GM12878 (cell line): ENCODE measurements at regions of chr1 and their contacts with region 1.

Region 1: GRCh38 chr1:177948336-177948972 is 21.4 kb downstream of the SEC16B start:
- DNase-seq: no peak
- ATAC-seq: peak; percentile 87
- H3K4me3 ChIP-seq: no peak overlapping the region
- H3K27ac ChIP-seq: no peak overlapping the region
- H3K4me1 ChIP-seq: no peaks in the 10 kb centered on the region
- H3K27me3 ChIP-seq: no peaks in the 10 kb centered on the region; a peak in 1 of 4 replicates
- CTCF ChIP-seq: peak; percentile 80 to 88 (median 87)
- EP300 ChIP-seq: no peak
- POLR2A ChIP-seq: no peak
- RAD21 ChIP-seq: peak; percentile 66

Region 2: DNA sequence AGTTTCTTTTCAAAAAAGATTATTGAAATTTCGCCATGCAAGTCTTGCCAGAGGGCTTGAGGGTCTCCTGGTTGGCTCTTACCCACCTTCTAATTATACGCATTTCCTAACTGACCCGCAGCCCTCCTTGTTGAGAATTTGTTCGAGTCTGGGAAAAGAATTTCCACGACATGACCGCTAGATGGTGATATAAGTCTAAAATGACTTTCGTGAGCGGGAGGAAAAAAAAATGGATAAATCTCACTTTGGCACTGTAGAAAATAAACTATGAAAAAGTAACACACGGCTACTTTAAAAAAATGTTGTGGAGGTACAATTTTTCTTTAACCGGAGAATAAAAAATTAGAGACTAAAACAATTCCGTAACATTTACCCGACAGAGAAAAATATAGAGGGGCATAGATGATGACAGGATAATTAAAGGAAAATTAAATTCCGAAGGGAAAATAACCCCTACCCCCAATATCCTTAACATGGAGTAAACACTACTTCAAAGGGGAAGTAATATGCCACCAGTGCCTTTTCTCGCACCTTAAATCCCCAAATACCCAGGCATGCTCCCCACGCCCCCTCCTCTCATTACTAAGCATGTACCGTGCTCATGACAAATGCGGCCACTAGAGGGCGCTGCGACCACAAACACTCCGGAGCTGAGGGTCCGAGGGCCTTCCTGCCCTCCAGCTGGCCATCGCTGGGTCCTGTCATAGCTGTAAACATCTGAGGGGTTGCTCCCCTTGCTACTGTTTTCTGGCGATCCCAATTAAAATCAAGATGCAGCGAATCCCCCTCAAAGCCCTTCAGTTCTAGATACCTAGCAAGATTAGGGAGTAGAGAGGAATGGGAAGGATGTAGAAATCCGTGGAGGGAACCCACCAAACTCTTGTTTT is 1050.9 kb before region 1 on chr1:
- CTCF ChIA-PET with region 1: interaction called, 14 read pairs
- POLR2A ChIA-PET with region 1: no interaction called
- RAD21 ChIA-PET with region 1: interaction called, 12 read pairs
- SMC1A ChIA-PET with region 1: interaction called, 4 read pairs
- in situ Hi-C with region 1: loop called (anchors 10 kb)
- intact Hi-C with region 1: loop called (anchors 1 kb)
- DNase-seq: no peak
- ATAC-seq: peak; percentile 92
- H3K4me3 ChIP-seq: no peak overlapping the region
- H3K27ac ChIP-seq: no peak overlapping the region
- H3K4me1 ChIP-seq: no peaks in the 10 kb centered on the region
- H3K27me3 ChIP-seq: no peaks in the 10 kb centered on the region; a peak in 1 of 4 replicates
- CTCF ChIP-seq: peak; percentile 64 to 85 (median 68)
- EP300 ChIP-seq: no peak
- POLR2A ChIP-seq: no peak
- RAD21 ChIP-seq: peak; percentile 70

Region 3: DNA sequence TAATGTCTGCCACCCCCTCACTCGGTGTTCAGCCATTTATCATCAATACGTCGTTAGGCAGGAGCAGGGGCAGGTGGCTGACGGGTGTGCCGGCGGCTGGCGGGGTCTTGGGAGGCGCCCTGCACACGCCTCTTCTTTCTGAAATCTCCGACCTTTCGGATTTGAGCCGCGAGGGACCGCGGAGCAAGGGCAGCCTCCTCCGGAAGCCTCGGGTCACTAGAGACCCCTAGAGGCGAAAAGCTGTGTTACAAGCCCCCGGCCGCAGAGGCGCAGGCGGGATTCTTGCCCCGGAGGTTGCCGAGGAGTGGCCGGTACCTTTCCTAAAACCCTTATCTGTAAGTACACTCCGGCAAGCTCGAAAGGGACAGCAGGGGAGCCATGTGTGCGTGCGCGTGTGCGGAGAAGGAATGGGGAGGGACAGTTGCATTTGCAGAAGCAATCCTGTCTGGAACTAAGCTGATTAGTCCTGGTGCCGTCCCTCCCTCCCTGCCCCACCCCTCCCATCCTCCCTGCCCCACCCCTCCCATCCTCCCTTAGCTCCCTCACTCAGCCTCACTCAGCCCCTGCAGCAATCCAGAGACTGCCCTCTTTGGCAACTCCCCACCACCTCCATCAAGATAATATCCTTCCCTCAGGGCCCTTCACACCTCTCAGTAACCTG is 766.7 kb before region 1 on chr1:
- CTCF ChIA-PET with region 1: interaction called, 3 read pairs
- POLR2A ChIA-PET with region 1: no interaction called
- RAD21 ChIA-PET with region 1: no interaction called
- SMC1A ChIA-PET with region 1: no interaction called
- in situ Hi-C with region 1: no loop called
- intact Hi-C with region 1: loop called (anchors 10 kb)
- DNase-seq: no peak
- ATAC-seq: peak; percentile 98
- H3K4me3 ChIP-seq: no peak overlapping the region
- H3K27ac ChIP-seq: no peak overlapping the region
- H3K4me1 ChIP-seq: no peaks in the 10 kb centered on the region
- H3K27me3 ChIP-seq: peaks cover 0 to 7% of the 10 kb centered on the region in 2 experiments; a peak in 3 of 4 replicates
- CTCF ChIP-seq: peak; percentile 71 to 84 (median 77)
- EP300 ChIP-seq: no peak
- POLR2A ChIP-seq: no peak
- RAD21 ChIP-seq: peak; percentile 63

Region 4: GRCh38 chr1:177817937-177818872 is 130.2 kb before region 1 on chr1:
- CTCF ChIA-PET with region 1: no interaction called
- POLR2A ChIA-PET with region 1: no interaction called
- RAD21 ChIA-PET with region 1: no interaction called
- SMC1A ChIA-PET with region 1: no interaction called
- in situ Hi-C with region 1: no loop called
- intact Hi-C with region 1: no loop called
- DNase-seq: peak; percentile 40
- ATAC-seq: peak; percentile 96
- H3K4me3 ChIP-seq: no peak overlapping the region
- H3K27ac ChIP-seq: no peak overlapping the region
- H3K4me1 ChIP-seq: peaks cover 5% of the 10 kb centered on the region; the same call in 1 of the 2 replicates
- H3K27me3 ChIP-seq: no peaks in the 10 kb centered on the region
- CTCF ChIP-seq: no peak
- EP300 ChIP-seq: peak in 1 of 2 experiments; percentile 25; a peak in 1 of 4 replicates
- POLR2A ChIP-seq: no peak
- RAD21 ChIP-seq: no peak

Region 5: GRCh38 chr1:177932123-177932522 is 16.3 kb before region 1 on chr1:
- CTCF ChIA-PET with region 1: interaction called, 13 read pairs
- POLR2A ChIA-PET with region 1: no interaction called
- RAD21 ChIA-PET with region 1: interaction called, 9 read pairs
- SMC1A ChIA-PET with region 1: interaction called, 6 read pairs
- in situ Hi-C with region 1: no loop called
- intact Hi-C with region 1: no loop called
- DNase-seq: no peak
- ATAC-seq: no peak
- H3K4me3 ChIP-seq: no peak overlapping the region
- H3K27ac ChIP-seq: no peak overlapping the region
- H3K4me1 ChIP-seq: no peaks in the 10 kb centered on the region
- H3K27me3 ChIP-seq: peaks cover 0 to 3% of the 10 kb centered on the region in 2 experiments
- CTCF ChIP-seq: no peak
- EP300 ChIP-seq: no peak
- POLR2A ChIP-seq: no peak
- RAD21 ChIP-seq: no peak

Region 6: DNA sequence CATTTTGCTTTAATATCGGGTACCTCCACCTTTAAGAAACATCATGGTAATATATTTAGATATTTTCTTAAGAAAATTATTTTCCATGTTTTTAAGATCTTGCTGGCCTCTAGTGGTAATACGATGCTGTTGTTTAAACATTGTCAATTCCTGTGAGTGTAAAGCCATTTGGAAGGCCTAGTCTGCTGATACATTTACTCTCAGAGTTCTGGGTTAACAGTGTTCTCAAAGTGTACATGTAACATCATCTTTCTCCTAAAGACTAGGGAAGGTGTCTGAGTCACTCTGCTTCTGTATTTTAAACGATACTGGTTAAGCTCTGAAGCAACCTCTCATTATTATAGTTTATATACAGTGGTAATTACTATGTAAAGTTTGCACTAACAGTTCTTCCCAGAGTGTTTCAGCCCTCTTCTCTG is 334.5 kb after region 1 on chr1:
- CTCF ChIA-PET with region 1: interaction called, 3 read pairs
- POLR2A ChIA-PET with region 1: no interaction called
- RAD21 ChIA-PET with region 1: no interaction called
- SMC1A ChIA-PET with region 1: interaction called, 4 read pairs
- in situ Hi-C with region 1: no loop called
- intact Hi-C with region 1: loop called (anchors 5 kb)
- DNase-seq: no peak
- ATAC-seq: peak; percentile 66
- H3K4me3 ChIP-seq: no peak overlapping the region
- H3K27ac ChIP-seq: no peak overlapping the region
- H3K4me1 ChIP-seq: no peaks in the 10 kb centered on the region
- H3K27me3 ChIP-seq: no peaks in the 10 kb centered on the region
- CTCF ChIP-seq: no peak; a peak in 1 of 6 replicates
- EP300 ChIP-seq: no peak
- POLR2A ChIP-seq: no peak
- RAD21 ChIP-seq: peak; percentile 37